BJ (cell line): ENCODE measurements at regions of chr6 and their contacts with region 1.

Region 1: DNA sequence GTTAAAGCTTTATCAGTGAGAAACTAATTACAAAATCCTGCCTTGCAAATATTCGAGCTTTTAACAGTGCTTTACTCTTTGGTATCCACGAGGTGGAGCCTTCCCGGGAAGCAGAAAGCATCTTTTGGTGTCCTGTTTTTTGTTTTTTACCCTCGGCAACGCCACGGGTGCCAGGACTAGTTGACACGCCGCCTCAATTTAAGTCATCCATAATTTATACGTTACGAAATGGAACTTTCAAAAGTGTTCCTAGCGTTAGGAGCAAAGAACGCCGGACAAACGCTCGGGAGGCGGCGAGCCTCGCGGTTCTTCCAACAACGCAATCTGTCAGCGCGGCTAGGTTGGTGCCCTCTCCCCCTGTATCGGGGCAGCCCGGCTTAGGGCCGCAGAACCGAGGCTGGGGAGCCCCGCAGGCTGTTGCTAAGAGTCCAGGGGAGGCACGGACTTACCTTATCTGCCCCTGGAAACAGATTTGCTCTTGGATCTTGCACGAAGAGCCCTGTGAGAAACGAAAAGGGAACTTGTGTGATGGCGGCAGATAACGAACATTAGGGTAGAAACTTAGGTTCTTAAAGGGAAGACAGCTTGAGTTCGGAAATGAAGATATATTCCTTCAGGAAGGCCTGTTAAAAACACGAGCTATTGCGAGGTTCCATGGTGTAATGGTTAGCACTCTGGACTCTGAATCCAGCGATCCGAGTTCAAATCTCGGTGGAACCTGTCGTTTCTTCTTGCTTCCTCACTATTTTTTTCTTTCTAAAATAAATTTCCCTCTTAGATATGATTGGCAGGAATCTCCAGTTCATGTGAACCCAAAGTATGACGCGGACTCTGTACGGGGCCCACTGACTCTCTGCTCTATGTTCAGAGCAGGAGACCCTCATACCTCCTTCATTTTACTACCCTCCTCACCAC is 46.2 kb upstream of the ZNF184 start:
- DNase-seq: peak; percentile 63
- H3K4me3 ChIP-seq: peak overlapping the region; percentile 53
- H3K27me3 ChIP-seq: peaks cover 10% of the 10 kb centered on the region
- CTCF ChIP-seq: peak; percentile 77

Region 2: GRCh38 chr6:27503436-27504030 is 15.6 kb before region 1 on chr6:
- CTCF ChIA-PET with region 1: interaction called, 16 read pairs
- POLR2A ChIA-PET with region 1: no interaction called
- DNase-seq: no peak
- H3K4me3 ChIP-seq: peak overlapping the region; percentile 41
- H3K27me3 ChIP-seq: peaks cover 3% of the 10 kb centered on the region
- CTCF ChIP-seq: no peak

Region 3: GRCh38 chr6:27532820-27533538 is 13.8 kb after region 1 on chr6:
- CTCF ChIA-PET with region 1: interaction called, 11 read pairs
- POLR2A ChIA-PET with region 1: no interaction called
- DNase-seq: no peak
- H3K4me3 ChIP-seq: no peak overlapping the region
- H3K27me3 ChIP-seq: no peaks in the 10 kb centered on the region; the same call in 1 of the 2 replicates
- CTCF ChIP-seq: no peak

Region 4: DNA sequence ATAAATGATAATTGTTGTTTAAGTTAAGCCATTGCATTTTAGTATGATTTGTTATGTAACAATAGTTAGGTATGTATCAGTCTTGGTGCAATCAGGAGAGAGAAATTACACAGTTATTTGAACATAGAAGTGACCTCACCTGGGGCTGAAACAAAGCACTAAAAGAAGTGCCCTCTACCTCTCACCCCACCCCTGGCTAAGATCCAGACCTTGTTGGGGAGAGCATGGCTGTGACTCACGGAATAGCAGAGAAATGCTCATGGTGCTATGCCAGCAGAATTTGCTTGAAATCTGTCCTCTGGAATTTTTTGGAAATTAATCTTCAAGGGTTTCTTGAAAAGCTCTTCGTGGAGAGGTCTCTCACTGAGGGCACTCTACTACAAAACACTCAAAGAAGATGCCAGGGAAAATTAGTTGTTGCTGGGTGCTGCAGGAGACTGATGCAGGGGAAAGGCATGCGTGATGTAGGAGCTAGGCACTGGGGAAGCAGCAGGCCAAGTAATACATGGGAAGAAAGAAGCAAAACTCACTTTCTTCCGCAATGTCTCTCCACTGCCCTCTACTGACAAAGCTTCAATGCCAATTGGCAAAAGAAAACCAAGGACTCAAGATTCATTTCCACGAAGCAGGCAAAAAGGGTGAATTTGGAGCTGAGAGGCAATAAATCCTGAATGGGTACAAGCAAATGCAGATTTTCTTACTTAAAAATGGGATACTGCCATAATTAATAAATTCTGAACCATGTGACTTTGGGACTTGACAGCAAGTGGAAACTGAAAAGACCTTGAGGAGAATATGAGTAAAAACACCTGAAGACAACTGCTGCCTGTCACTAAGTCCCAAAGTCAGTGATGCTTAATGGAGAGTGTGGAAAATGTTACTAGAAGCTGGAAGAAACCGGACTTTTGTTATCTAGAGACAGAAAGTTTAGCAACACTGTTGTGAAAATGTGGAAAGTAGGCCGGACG is 90.1 kb after region 1 on chr6:
- CTCF ChIA-PET with region 1: interaction called, 12 read pairs
- POLR2A ChIA-PET with region 1: no interaction called
- DNase-seq: no peak
- H3K4me3 ChIP-seq: no peak overlapping the region
- H3K27me3 ChIP-seq: no peaks in the 10 kb centered on the region
- CTCF ChIP-seq: peak; percentile 76

Region 5: GRCh38 chr6:27753668-27754407 is 234.7 kb after region 1 on chr6:
- CTCF ChIA-PET with region 1: interaction called, 11 read pairs
- POLR2A ChIA-PET with region 1: interaction called, 4 read pairs
- DNase-seq: peak; percentile 16
- H3K4me3 ChIP-seq: peak overlapping the region; percentile 44
- H3K27me3 ChIP-seq: peaks cover 3% of the 10 kb centered on the region
- CTCF ChIP-seq: peak; percentile 27; the same call in 1 of the 2 replicates